Right ventricle myocardium superior (tissue), 1 donor: ENCODE measurements at regions of chr1 and their contacts with region 1.

Region 1: GRCh38 chr1:11967028-11967547 is 13.2 kb upstream of the MFN2 start:
- DNase-seq: no peak
- ATAC-seq: peak; percentile 69

Region 2: GRCh38 chr1:11838349-11839272 is 128.5 kb before region 1 on chr1:
- intact Hi-C with region 1: no loop called
- DNase-seq: peak; percentile 85
- ATAC-seq: peak; percentile 91

Region 3: DNA sequence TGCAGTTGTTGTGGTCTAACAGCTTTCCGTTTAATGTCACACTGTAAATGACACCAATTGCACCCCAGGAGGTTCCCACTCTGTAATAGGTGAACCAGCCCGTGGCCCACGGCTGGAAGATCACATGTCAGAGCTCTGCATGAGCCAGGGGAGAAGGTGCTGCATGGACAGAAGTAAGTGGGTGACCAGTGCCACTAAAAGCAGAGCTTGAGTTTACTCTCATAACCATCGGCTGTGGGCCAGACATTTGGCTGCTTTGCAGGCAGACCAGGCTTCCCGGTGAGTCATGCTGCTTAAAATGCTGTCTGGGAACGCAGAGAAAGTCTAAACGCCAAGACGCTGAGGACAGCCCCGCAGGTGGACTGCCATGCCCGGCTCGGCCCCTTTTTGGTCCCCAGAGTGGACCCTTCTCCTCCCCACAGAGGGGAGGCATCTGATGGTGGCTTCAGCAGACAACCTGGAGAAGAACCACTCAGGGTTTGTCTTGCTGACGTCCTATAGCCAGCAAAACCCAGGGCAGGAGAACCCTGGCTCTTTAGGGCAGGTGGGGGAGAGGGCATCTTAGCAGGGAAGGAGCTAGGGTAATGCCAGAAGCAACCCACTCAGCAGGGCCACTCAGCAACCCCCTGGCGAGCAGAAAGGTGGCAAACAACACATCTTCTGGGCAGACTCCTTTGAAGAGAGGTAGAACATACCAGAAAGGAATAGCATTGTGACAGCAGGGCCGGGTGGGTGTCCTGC is 48.1 kb before region 1 on chr1:
- intact Hi-C with region 1: loop called (anchors 10 kb)
- DNase-seq: peak; percentile 79
- ATAC-seq: peak; percentile 86